Prostate gland (tissue), 2 donors: ENCODE measurements at regions of chr10 and their contacts with region 1.

Region 1: GRCh38 chr10:121598207-121598862 is at the start of gene FGFR2:
- DNase-seq: peak; percentile 87
- H3K4me3 ChIP-seq: peak within 1 kb of the TSS; percentile 46 to 56
- H3K27ac ChIP-seq: peak within 1 kb of the TSS; percentile 81 to 83
- H3K4me1 ChIP-seq: no peaks in the 10 kb centered on the region
- H3K27me3 ChIP-seq: no peaks in the 10 kb centered on the region
- CTCF ChIP-seq: peak in 2 of 4 experiments; percentile 28 to 44
- POLR2A ChIP-seq: peak; percentile 62
- total RNA-seq, gene FGFR2: 49.7 to 78.5 TPM

Region 2: GRCh38 chr10:120948889-120949608 is 649.3 kb before region 1 on chr10:
- intact Hi-C with region 1: loop called (anchors 1 kb)
- DNase-seq: no peak
- H3K4me3 ChIP-seq: no peak overlapping the region
- H3K27ac ChIP-seq: no peak overlapping the region
- H3K4me1 ChIP-seq: peaks cover 10% of the 10 kb centered on the region
- H3K27me3 ChIP-seq: no peaks in the 10 kb centered on the region
- CTCF ChIP-seq: peak; percentile 35 to 63 (median 61)
- POLR2A ChIP-seq: no peak

Region 3: GRCh38 chr10:121459765-121460453 is 138.4 kb before region 1 on chr10:
- intact Hi-C with region 1: loop called (anchors 1 kb)
- DNase-seq: no peak
- H3K4me3 ChIP-seq: no peak overlapping the region
- H3K27ac ChIP-seq: peak overlapping the region in 1 of 2 donors; percentile 12
- H3K4me1 ChIP-seq: no peaks in the 10 kb centered on the region
- H3K27me3 ChIP-seq: no peaks in the 10 kb centered on the region
- CTCF ChIP-seq: no peak
- POLR2A ChIP-seq: no peak